Activated naive CD4-positive, alpha-beta T cell treated with anti-CD3 and anti-CD28 coated beads for 36 hours (primary cell): ENCODE measurements at regions of chr15 and their contacts with region 1.

Region 1: GRCh38 chr15:63610200-63610841 is 13.1 kb downstream of the FBXL22 start:
- DNase-seq: peak; percentile 91
- H3K4me3 Mint-ChIP-seq: no peak overlapping the region
- H3K27ac Mint-ChIP-seq: peak overlapping the region; percentile 83
- H3K4me1 Mint-ChIP-seq: peaks cover 24% of the 10 kb centered on the region
- H3K27me3 Mint-ChIP-seq: no peaks in the 10 kb centered on the region

Region 2: GRCh38 chr15:63668601-63669000 is 58.3 kb after region 1 on chr15:
- CTCF ChIA-PET with region 1: interaction called, 3 read pairs
- intact Hi-C with region 1: loop called (anchors 2 kb)
- DNase-seq: no peak
- H3K4me3 Mint-ChIP-seq: peak overlapping the region; percentile 57
- H3K27ac Mint-ChIP-seq: peak overlapping the region; percentile 83
- H3K4me1 Mint-ChIP-seq: peaks cover 57% of the 10 kb centered on the region
- H3K27me3 Mint-ChIP-seq: no peaks in the 10 kb centered on the region

Region 3: GRCh38 chr15:63891079-63891767 is 280.9 kb after region 1 on chr15:
- CTCF ChIA-PET with region 1: interaction called, 3 read pairs
- intact Hi-C with region 1: loop called (anchors 1 kb)
- DNase-seq: peak; percentile 86
- H3K4me3 Mint-ChIP-seq: no peak overlapping the region
- H3K27ac Mint-ChIP-seq: no peak overlapping the region
- H3K4me1 Mint-ChIP-seq: peaks cover 40% of the 10 kb centered on the region
- H3K27me3 Mint-ChIP-seq: no peaks in the 10 kb centered on the region

Region 4: DNA sequence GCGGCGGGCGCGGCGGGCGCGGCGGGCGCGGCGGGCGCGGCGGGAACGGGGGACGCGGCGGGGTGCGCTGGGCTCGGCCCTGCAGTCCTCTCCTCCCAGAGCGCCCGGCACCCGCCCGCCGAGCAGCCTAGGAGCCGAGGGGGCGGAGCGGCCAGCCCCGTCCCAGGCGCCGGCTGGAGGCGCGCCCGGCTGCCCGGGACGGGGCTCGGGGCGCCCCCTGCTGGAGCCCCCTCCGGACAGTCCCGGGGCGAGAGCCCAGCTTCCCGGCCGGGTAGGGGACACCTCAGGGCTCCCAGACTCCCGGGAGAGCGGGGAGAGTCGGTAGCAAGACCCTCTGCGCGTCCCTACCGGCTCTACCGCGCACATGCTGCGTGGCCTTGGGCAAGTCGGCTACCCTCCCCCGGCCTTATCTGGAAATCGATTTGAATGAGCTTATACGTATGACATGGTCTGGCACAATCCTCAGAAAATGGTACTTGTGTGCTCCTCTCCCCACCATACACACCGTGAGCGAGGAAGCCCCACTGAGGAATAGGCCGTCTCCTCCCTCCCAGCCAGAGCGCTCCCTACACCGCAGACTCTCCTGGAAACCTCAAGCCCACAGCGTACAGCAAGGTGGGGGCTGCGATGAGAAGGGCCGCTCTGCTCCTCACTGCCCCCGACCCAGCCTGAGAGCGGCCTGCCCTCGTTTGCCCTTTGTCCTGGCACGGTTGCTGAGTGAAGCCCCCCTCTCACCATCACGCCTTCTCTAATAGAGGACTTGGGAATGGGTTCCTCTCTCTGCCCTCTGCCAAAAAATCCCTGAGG is 436.2 kb after region 1 on chr15 and contains the start of gene DAPK2:
- CTCF ChIA-PET with region 1: interaction called, 10 read pairs
- intact Hi-C with region 1: no loop called
- DNase-seq: peak; percentile 56
- H3K4me3 Mint-ChIP-seq: peak within 1 kb of the TSS; percentile 53
- H3K27ac Mint-ChIP-seq: no peak within 1 kb of the TSS
- H3K4me1 Mint-ChIP-seq: peaks cover 4% of the 10 kb centered on the region
- H3K27me3 Mint-ChIP-seq: peaks cover 10% of the 10 kb centered on the region
- total RNA-seq, gene DAPK2: 0.44 TPM in 1 of 2 experiments, not detected in the other

Region 5: DNA sequence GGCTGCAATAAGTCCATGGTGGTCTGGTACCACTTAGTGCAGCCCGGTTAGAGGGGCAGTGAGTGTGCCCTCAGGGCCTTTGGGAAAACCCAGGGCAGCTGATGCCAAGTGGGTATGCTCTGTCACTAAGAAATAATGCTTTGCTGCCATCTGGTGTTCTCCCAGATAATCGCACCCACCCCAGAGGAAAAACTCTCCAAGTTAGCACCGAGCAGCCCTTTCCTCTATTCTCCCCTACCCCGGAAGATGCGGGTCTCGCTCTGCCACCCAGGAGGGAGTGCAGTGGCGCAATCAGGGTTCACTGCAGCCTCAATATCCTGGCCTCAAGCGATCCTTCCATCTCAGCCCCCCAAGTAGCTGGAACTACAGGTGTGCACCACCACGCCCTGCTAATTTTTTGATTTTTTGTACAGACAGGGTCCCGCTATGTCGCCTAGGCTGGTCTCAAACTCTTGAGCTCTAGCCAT is 457.3 kb after region 1 on chr15:
- CTCF ChIA-PET with region 1: interaction called, 49 read pairs
- intact Hi-C with region 1: loop called (anchors 1 kb)
- DNase-seq: peak; percentile 81
- H3K4me3 Mint-ChIP-seq: no peak overlapping the region
- H3K27ac Mint-ChIP-seq: no peak overlapping the region
- H3K4me1 Mint-ChIP-seq: peaks cover 5% of the 10 kb centered on the region
- H3K27me3 Mint-ChIP-seq: no peaks in the 10 kb centered on the region